CD8-positive, alpha-beta T cell (primary cell): ENCODE measurements at regions of chr11 and their contacts with region 1.

Region 1: GRCh38 chr11:119196833-119197483 is 9.2 kb upstream of the CBL start:
- DNase-seq: peak; percentile 44 to 87 (median 68)
- ATAC-seq: peak; percentile 97
- H3K4me3 ChIP-seq: no peak overlapping the region
- H3K4me3 Mint-ChIP-seq: no peak overlapping the region
- H3K27ac ChIP-seq: no peak overlapping the region
- H3K27ac Mint-ChIP-seq: no peak overlapping the region
- H3K4me1 ChIP-seq: no peaks in the 10 kb centered on the region
- H3K4me1 Mint-ChIP-seq: peaks cover 4% of the 10 kb centered on the region
- H3K27me3 ChIP-seq: no peaks in the 10 kb centered on the region
- H3K27me3 Mint-ChIP-seq: no peaks in the 10 kb centered on the region
- CTCF ChIP-seq: peak; percentile 81

Region 2: GRCh38 chr11:119018074-119018938 is 178.7 kb before region 1 on chr11 and contains the starts of genes RPS25 and TRAPPC4:
- CTCF ChIA-PET with region 1: no interaction called
- POLR2A ChIA-PET with region 1: no interaction called
- intact Hi-C with region 1: loop called in 1 of 2 experiments (anchors 1 kb)
- DNase-seq: peak; percentile 90 to 99 (median 95)
- ATAC-seq: peak; percentile 86
- H3K4me3 ChIP-seq: peak within 1 kb of the TSS; percentile 98
- H3K4me3 Mint-ChIP-seq: peak within 1 kb of the TSS; percentile 99
- H3K27ac ChIP-seq: peak within 1 kb of the TSS; percentile 98 to 99
- H3K27ac Mint-ChIP-seq: peak within 1 kb of the TSS; percentile 99
- H3K4me1 ChIP-seq: peaks cover 44% of the 10 kb centered on the region
- H3K4me1 Mint-ChIP-seq: peaks cover 55% of the 10 kb centered on the region
- H3K27me3 ChIP-seq: no peaks in the 10 kb centered on the region
- H3K27me3 Mint-ChIP-seq: no peaks in the 10 kb centered on the region
- CTCF ChIP-seq: no peak
- total RNA-seq, gene RPS25: 2,737 to 2,869 TPM
- total RNA-seq, gene TRAPPC4: 65.6 to 73.3 TPM

Region 3: DNA sequence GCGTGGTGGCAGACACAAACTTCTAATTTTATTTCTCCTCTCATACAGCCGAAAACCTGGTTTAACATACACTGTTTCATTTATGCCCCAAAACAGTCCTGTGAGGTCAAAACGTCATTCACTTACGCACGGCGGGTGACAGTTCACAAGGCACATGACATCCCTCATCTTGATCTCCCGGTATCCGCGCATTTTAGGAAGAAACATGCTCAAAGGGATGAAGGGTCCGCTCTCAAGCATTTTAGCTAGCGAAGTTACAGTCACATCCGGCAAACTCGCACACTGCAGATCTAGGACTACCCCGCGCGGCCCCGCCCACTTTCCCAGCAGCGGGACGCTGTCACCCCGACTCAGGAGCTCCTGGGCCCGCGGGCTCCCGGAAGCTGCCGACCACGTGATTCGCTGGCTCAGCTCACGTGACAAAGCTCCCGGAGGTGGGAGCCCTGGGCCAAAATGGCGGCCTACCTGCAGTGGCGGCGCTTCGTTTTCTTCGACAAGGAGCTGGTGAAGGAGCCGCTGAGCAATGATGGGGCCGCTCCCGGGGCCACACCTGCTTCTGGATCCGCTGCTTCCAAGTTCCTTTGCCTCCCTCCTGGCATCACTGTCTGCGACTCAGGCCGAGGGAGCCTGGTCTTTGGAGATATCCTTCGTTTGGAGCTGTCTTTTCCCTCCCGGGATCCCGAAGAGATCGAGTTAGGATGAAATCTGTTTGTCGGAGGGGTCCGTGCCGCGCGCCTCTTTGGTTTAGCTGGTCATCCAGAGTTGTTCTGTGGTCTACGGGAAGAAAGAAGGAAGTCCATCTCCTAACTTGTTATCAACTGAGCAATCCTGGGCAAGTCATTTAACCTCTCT is 129.4 kb before region 1 on chr11 and contains the start of gene VPS11:
- CTCF ChIA-PET with region 1: interaction called, 10 read pairs
- POLR2A ChIA-PET with region 1: interaction called, 3 read pairs
- intact Hi-C with region 1: loop called in 1 of 2 experiments (anchors 2 kb)
- DNase-seq: peak; percentile 94 to 99 (median 98)
- ATAC-seq: peak; percentile 92
- H3K4me3 ChIP-seq: peak within 1 kb of the TSS; percentile 83 to 88
- H3K4me3 Mint-ChIP-seq: peak within 1 kb of the TSS; percentile 89
- H3K27ac ChIP-seq: peak within 1 kb of the TSS; percentile 79 to 94
- H3K27ac Mint-ChIP-seq: peak within 1 kb of the TSS; percentile 97
- H3K4me1 ChIP-seq: peaks cover 29% of the 10 kb centered on the region
- H3K4me1 Mint-ChIP-seq: peaks cover 51% of the 10 kb centered on the region
- H3K27me3 ChIP-seq: no peaks in the 10 kb centered on the region
- H3K27me3 Mint-ChIP-seq: no peaks in the 10 kb centered on the region
- CTCF ChIP-seq: no peak
- total RNA-seq, gene VPS11: 91.0 to 109 TPM

Region 4: GRCh38 chr11:119153049-119153818 is 43.7 kb before region 1 on chr11:
- CTCF ChIA-PET with region 1: interaction called, 10 read pairs
- POLR2A ChIA-PET with region 1: no interaction called
- intact Hi-C with region 1: loop called in 1 of 2 experiments (anchors 10 kb)
- DNase-seq: peak in 1 of 9 experiments; percentile 1
- ATAC-seq: no peak
- H3K4me3 ChIP-seq: no peak overlapping the region
- H3K4me3 Mint-ChIP-seq: no peak overlapping the region
- H3K27ac ChIP-seq: no peak overlapping the region
- H3K27ac Mint-ChIP-seq: no peak overlapping the region
- H3K4me1 ChIP-seq: peaks cover 13% of the 10 kb centered on the region
- H3K4me1 Mint-ChIP-seq: peaks cover 6% of the 10 kb centered on the region
- H3K27me3 ChIP-seq: peaks cover 0 to 3% of the 10 kb centered on the region in 2 experiments
- H3K27me3 Mint-ChIP-seq: peaks cover 9% of the 10 kb centered on the region
- CTCF ChIP-seq: no peak

Region 5: DNA sequence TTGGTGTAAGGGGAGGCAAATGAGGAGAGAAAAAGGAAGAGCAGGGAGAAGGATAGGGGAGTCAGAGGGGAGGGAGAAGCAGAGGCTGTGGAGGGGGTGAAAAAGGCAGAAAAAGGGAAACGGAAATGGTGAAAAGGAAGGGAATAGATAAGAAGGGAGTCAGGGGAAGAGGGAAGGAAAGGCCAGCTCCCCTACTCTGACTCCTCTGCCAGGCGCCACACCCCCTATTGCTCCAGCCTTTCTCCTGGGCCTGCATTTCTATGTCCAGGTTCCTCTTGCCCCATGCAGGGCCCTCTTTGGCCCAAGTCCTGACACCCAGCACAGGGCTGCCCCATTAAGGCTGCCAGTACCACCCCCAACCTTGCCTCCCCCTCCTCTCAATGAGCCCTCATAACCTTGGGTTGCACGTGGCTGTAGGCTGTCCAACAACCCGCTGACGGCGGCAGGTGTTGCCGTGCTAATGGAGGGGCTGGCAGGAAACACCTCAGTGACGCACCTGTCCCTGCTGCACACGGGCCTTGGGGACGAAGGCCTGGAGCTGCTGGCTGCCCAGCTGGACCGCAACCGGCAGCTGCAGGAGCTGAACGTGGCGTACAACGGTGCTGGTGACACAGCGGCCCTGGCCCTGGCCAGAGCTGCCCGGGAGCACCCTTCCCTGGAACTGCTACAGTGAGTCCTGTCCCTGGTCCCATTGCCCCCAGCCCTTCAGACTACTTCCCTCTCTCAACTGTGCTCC is 15.1 kb before region 1 on chr11:
- CTCF ChIA-PET with region 1: interaction called, 25 read pairs
- POLR2A ChIA-PET with region 1: no interaction called
- intact Hi-C with region 1: no loop called
- DNase-seq: no peak
- ATAC-seq: no peak
- H3K4me3 ChIP-seq: no peak overlapping the region
- H3K4me3 Mint-ChIP-seq: no peak overlapping the region
- H3K27ac ChIP-seq: no peak overlapping the region
- H3K27ac Mint-ChIP-seq: no peak overlapping the region
- H3K4me1 ChIP-seq: peaks cover 10% of the 10 kb centered on the region
- H3K4me1 Mint-ChIP-seq: peaks cover 4% of the 10 kb centered on the region
- H3K27me3 ChIP-seq: no peaks in the 10 kb centered on the region
- H3K27me3 Mint-ChIP-seq: no peaks in the 10 kb centered on the region
- CTCF ChIP-seq: no peak

Region 6: GRCh38 chr11:119323538-119324033 is 126.6 kb after region 1 on chr11:
- CTCF ChIA-PET with region 1: interaction called, 70 read pairs
- POLR2A ChIA-PET with region 1: no interaction called
- intact Hi-C with region 1: no loop called
- DNase-seq: peak; percentile 65 to 88 (median 76)
- ATAC-seq: peak; percentile 18
- H3K4me3 ChIP-seq: no peak overlapping the region
- H3K4me3 Mint-ChIP-seq: no peak overlapping the region
- H3K27ac ChIP-seq: no peak overlapping the region
- H3K27ac Mint-ChIP-seq: no peak overlapping the region
- H3K4me1 ChIP-seq: peaks cover 11% of the 10 kb centered on the region
- H3K4me1 Mint-ChIP-seq: peaks cover 26% of the 10 kb centered on the region
- H3K27me3 ChIP-seq: peaks cover 0 to 2% of the 10 kb centered on the region in 2 experiments
- H3K27me3 Mint-ChIP-seq: peaks cover 1% of the 10 kb centered on the region
- CTCF ChIP-seq: peak; percentile 77